Activated naive CD8-positive, alpha-beta T cell treated with anti-CD3 and anti-CD28 coated beads, Interleukin-2, amount 10 ng/mL, durations not matched to agents 7 days and 5 days (primary cell): ENCODE measurements at regions of chr7 and their contacts with region 1.

Region 1: GRCh38 chr7:127392566-127393367 is at the start of gene ZNF800:
- DNase-seq: peak; percentile 88
- ATAC-seq: peak; percentile 86
- H3K4me3 Mint-ChIP-seq: peak within 1 kb of the TSS; percentile 98
- H3K27ac Mint-ChIP-seq: peak within 1 kb of the TSS; percentile 96
- H3K4me1 Mint-ChIP-seq: peaks cover 43% of the 10 kb centered on the region
- H3K27me3 Mint-ChIP-seq: no peaks in the 10 kb centered on the region
- total RNA-seq, gene ZNF800: 49.4 to 55.9 TPM

Region 2: DNA sequence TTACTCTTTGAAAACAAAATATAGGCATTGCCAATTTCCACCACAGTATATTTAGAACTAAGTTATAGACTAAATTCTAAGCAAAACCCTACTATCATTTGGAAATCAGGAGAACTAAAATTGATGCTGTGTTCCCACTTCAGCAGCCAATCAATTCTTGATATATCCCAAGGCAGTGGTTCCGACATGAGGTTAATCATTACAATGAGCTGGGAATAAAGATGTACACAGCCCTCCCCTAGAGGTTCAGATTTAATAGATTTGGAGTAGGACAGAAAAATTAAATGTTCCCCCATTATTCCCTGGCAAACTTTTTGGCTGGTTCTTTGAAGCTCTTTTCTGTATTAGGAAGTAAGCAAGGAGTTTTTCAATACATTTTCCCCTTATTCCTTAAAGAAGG is 15.3 kb before region 1 on chr7:
- POLR2A ChIA-PET with region 1: interaction called, 15 read pairs
- DNase-seq: no peak
- ATAC-seq: no peak
- H3K4me3 Mint-ChIP-seq: no peak overlapping the region
- H3K27ac Mint-ChIP-seq: no peak overlapping the region
- H3K4me1 Mint-ChIP-seq: peaks cover 33% of the 10 kb centered on the region
- H3K27me3 Mint-ChIP-seq: no peaks in the 10 kb centered on the region

Region 3: DNA sequence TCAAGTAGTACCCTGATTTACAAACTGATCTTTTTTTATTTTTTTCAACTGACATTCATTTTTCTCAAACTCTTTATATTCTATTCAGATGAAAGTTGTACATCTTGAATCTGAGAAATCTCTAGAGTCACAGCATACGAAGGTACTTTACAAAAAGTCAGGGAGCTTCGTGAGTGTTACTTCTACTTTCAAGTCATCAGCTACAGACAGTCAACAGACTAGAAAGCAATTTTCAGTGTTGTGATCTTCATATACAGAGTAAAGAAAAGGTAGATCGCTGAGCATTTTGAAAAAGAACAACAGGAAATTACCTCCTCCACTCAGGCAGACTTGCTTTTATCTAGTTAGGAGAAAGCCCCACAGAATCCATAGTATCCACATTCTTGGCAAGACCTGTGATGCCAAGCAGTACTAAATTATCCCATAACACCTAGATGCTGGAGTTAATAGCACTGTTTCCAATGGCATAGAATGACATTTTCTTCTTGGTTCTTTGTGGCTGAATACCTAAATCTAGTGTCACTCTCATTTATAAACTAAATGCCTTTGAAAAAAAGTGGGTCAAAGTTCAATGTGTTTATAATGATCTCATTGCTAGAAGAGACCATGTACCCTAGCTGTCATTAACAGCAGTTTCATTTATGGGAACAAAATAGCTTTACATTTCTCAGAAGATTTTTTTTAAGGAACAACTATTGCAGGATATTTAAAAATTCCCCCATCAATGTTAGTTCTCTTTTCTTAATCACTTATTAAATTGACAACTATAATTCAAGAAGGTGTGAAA is 11.7 kb after region 1 on chr7:
- POLR2A ChIA-PET with region 1: interaction called, 31 read pairs
- DNase-seq: no peak
- ATAC-seq: peak; percentile 33
- H3K4me3 Mint-ChIP-seq: peak overlapping the region; percentile 9
- H3K27ac Mint-ChIP-seq: peak overlapping the region; percentile 25
- H3K4me1 Mint-ChIP-seq: peaks cover 17% of the 10 kb centered on the region
- H3K27me3 Mint-ChIP-seq: no peaks in the 10 kb centered on the region

Region 4: DNA sequence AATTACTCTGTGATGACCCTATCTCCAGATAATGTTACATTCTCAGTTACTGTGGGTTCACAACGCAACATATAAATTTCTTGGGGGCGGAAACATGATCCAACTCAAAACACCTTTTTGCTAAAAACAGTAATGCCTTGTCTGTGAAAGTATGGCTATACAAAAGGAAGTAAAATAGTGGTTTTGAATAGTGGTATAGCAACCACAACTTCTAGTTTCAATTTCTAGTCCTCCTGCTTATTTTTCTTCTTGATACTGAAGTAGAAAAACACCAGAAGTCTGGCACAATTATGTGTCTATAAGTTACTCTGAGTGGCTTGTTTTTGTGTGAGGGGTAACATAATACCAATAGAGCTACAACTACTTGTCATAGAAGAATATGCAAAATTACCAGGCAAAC is 21.2 kb after region 1 on chr7:
- POLR2A ChIA-PET with region 1: interaction called, 51 read pairs
- DNase-seq: no peak
- ATAC-seq: peak; percentile 79
- H3K4me3 Mint-ChIP-seq: peak overlapping the region; percentile 63
- H3K27ac Mint-ChIP-seq: peak overlapping the region; percentile 94
- H3K4me1 Mint-ChIP-seq: peaks cover 41% of the 10 kb centered on the region
- H3K27me3 Mint-ChIP-seq: peaks cover 2% of the 10 kb centered on the region

Region 5: GRCh38 chr7:127447326-127447945 is 54.7 kb after region 1 on chr7:
- POLR2A ChIA-PET with region 1: interaction called, 19 read pairs
- DNase-seq: peak; percentile 53
- ATAC-seq: peak; percentile 100
- H3K4me3 Mint-ChIP-seq: no peak overlapping the region
- H3K27ac Mint-ChIP-seq: no peak overlapping the region
- H3K4me1 Mint-ChIP-seq: peaks cover 2% of the 10 kb centered on the region
- H3K27me3 Mint-ChIP-seq: peaks cover 25% of the 10 kb centered on the region